Right ventricle myocardium inferior (tissue), 1 donor: ENCODE measurements at regions of chr19 and their contacts with region 1.

Region 1: DNA sequence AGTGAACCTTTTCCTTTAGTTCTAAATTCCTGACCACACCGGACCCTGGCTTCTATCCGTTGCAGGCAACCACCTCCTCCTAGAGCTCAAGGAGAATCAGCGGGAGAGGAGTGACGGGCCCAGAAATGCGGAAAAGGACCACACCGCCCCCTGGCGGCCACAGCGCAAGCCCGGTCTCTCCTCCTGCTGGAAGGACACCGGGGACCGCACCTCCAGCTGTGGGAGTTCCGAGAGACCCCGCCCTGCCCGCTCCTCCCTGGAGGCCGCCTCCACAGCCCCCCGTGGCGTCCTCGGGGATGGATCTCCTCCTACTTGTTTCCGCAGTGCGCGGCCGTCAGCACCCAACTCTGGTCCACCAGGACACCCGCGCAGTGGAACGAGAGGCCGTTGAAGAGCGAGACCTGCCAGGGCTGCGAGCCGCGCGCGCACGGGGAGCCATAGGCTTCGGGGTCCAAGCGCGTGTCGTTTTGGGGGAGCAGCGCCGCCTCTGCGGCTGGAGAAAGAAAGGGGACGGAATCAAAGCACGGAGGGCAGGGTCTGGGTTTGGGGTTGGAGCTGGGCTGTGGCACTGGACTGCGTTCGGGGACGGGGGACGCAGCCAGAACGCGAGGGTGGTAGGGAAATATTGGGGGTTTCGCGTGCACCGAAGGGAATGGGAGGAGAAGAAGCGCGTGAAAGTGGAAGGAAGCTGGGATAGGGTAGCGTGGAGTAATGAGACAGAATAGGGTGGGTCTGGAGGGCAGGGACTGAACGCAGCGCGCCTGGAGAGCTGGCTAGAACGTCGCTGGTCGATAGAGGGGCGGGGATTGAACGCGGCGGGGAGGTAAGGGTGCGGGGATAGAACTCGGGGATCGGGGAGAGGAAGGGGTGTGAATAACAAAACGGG is 2.5 kb downstream of the KLK10 start:
- DNase-seq: no peak
- ATAC-seq: peak; percentile 21

Region 2: DNA sequence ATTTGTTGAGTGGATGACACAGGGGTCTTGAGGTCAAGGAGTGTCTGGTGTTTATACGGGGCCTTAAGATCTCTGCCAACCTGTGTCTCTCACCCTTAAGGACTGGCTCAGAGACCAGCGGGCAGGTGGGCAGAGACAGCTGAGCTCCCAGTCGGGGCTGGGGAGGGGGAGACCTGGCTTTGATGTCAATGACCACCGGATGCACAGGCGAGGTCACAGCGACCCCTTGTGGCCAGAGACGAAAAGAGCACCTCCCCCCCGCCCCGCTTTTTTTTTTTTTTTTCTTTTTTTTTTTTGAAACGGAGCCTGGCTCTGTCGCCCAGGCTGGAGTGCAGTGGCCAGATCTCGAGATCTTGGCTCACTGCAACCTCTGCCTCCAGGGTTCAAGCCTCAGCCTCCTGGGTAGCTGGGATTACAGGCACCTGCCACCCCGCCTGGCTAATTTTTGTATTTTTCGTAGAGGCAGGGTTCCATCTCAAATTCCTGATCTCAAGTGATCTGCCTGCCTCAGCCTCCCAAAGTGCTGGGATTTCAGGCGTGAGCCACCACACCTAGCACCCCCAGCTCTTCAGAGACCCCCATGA is 77.7 kb after region 1 on chr19:
- intact Hi-C with region 1: loop called (anchors 1 kb)
- DNase-seq: no peak
- ATAC-seq: no peak

Region 3: GRCh38 chr19:51166846-51167490 is 149.9 kb after region 1 on chr19:
- intact Hi-C with region 1: loop called (anchors 10 kb)
- DNase-seq: no peak
- ATAC-seq: no peak